MCF 10A (cell line): ENCODE measurements at regions of chr5 and their contacts with region 1.

Region 1: GRCh38 chr5:142024771-142025304 is 12.0 kb upstream of the GNPDA1 start:
- DNase-seq: peak; percentile 91
- H3K4me3 Mint-ChIP-seq: peak overlapping the region; percentile 83
- H3K27ac Mint-ChIP-seq: peak overlapping the region; percentile 96
- H3K4me1 Mint-ChIP-seq: peaks cover 6% of the 10 kb centered on the region
- H3K27me3 Mint-ChIP-seq: no peaks in the 10 kb centered on the region
- CTCF ChIP-seq: no peak

Region 2: DNA sequence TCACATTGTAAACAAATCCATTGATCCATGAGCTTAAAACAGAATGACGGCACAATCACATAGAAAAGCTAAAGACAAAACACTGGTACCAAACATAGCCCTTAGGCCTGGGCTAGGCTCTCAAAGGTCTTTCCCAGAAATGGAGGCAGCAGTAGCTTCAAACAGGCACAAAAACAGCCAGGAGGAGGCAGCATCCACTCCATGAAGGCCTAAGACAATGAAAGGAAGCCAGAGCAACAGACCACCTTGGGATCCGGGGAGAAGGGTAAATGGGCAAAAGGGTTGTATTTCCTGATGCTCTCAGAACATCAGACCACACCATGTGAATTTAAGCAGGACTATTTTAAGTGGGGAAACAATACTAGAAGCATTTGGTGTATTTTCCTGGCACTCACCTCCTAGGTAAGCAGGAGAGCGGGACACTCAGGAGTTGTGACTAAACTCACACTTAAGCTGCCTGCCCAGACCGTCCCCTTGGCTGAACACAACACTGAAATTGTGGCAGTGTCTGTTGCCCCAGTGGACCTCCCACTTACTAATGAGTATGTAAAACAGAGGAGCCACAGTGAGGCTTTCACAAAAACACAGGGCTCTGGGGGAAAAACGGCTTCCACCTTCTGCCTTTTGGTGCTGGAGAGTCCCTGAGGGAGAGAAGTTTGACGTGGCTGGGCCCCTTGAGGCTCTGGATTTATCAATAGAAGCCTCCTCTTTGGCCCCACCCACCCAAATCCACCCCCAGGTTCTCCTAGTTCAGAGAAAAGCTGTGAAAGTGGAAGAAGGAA is 23.9 kb before region 1 on chr5:
- CTCF ChIA-PET with region 1: no interaction called
- POLR2A ChIA-PET with region 1: interaction called, 10 read pairs
- intact Hi-C with region 1: no loop called
- DNase-seq: peak; percentile 43
- H3K4me3 Mint-ChIP-seq: no peak overlapping the region
- H3K27ac Mint-ChIP-seq: no peak overlapping the region
- H3K4me1 Mint-ChIP-seq: peaks cover 9% of the 10 kb centered on the region
- H3K27me3 Mint-ChIP-seq: no peaks in the 10 kb centered on the region
- CTCF ChIP-seq: no peak

Region 3: DNA sequence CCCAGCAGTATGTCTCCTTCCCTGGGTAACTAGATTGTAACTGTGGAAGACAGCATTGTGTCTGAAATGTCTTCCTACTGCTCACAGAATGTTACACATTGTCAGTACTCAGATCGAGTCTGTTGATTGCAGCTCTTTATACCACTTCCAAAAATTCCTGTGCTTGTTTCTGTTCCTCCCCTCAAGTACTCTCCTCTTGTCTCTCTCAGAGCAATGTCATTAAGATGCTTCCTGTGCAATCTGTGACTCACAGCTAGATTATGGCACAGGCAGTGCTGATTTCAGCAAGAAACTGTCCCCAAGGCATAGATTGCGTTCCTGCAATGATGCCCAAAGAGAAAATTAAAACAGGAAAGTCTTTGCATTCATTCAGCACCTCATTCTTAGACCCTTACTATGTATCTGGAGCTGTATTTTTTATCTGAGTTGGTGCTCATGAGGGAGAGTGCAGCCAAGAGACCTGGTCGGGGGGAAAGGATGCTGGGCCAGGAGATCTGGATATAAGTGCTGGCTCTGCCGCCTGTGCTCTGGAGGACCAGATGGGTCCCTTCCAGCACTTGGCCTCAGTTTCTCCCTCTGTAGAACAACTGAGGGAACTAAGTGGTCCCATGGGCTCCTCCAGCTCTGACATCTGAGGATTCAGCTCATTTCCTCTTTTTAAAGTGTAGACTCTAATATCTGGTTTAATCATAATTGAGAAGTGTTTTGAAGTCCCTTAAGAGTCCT is 28.8 kb after region 1 on chr5:
- CTCF ChIA-PET with region 1: interaction called, 4 read pairs
- POLR2A ChIA-PET with region 1: interaction called, 18 read pairs
- intact Hi-C with region 1: no loop called
- DNase-seq: peak; percentile 71
- H3K4me3 Mint-ChIP-seq: no peak overlapping the region
- H3K27ac Mint-ChIP-seq: no peak overlapping the region
- H3K4me1 Mint-ChIP-seq: peaks cover 33% of the 10 kb centered on the region
- H3K27me3 Mint-ChIP-seq: no peaks in the 10 kb centered on the region
- CTCF ChIP-seq: no peak

Region 4: GRCh38 chr5:142059294-142059940 is 34.6 kb after region 1 on chr5:
- CTCF ChIA-PET with region 1: interaction called, 4 read pairs
- POLR2A ChIA-PET with region 1: interaction called, 18 read pairs
- intact Hi-C with region 1: no loop called
- DNase-seq: peak; percentile 53
- H3K4me3 Mint-ChIP-seq: no peak overlapping the region
- H3K27ac Mint-ChIP-seq: no peak overlapping the region
- H3K4me1 Mint-ChIP-seq: peaks cover 24% of the 10 kb centered on the region
- H3K27me3 Mint-ChIP-seq: no peaks in the 10 kb centered on the region
- CTCF ChIP-seq: no peak

Region 5: DNA sequence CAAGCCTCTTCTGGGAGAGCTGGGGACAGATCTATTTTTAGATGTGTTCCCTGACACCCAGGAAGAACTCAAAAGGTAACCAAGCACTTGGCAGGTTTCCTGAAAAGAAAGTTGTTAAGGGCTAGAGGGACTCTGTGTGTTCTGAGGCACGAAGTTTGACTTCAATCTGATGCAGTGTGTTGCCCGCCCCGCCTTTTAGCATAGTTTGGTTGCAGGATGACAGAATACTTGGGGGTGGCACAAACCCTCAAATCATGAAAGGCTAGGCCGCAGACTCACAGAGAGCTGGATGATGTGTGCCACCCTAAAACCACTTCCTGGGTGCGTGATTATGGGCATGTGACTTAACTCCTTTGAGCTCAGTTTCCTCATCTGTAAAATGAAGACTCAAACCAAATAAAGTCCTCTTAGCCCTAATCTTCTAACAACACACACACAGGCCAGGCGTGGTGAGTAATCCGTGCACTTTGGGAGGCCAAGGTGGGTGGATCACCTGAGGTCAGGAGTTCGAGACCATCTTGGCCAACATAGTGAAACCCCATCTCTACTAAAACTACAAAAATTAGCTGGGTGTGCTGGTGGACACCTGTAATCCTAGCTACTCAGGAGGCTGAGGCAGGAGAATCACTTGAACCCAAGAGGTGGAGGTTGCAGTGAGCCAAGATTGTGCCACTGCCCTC is 71.0 kb after region 1 on chr5:
- CTCF ChIA-PET with region 1: no interaction called
- POLR2A ChIA-PET with region 1: interaction called, 4 read pairs
- intact Hi-C with region 1: loop called (anchors 5 kb)
- DNase-seq: no peak
- H3K4me3 Mint-ChIP-seq: no peak overlapping the region
- H3K27ac Mint-ChIP-seq: no peak overlapping the region
- H3K4me1 Mint-ChIP-seq: peaks cover 20% of the 10 kb centered on the region
- H3K27me3 Mint-ChIP-seq: no peaks in the 10 kb centered on the region
- CTCF ChIP-seq: no peak

Region 6: DNA sequence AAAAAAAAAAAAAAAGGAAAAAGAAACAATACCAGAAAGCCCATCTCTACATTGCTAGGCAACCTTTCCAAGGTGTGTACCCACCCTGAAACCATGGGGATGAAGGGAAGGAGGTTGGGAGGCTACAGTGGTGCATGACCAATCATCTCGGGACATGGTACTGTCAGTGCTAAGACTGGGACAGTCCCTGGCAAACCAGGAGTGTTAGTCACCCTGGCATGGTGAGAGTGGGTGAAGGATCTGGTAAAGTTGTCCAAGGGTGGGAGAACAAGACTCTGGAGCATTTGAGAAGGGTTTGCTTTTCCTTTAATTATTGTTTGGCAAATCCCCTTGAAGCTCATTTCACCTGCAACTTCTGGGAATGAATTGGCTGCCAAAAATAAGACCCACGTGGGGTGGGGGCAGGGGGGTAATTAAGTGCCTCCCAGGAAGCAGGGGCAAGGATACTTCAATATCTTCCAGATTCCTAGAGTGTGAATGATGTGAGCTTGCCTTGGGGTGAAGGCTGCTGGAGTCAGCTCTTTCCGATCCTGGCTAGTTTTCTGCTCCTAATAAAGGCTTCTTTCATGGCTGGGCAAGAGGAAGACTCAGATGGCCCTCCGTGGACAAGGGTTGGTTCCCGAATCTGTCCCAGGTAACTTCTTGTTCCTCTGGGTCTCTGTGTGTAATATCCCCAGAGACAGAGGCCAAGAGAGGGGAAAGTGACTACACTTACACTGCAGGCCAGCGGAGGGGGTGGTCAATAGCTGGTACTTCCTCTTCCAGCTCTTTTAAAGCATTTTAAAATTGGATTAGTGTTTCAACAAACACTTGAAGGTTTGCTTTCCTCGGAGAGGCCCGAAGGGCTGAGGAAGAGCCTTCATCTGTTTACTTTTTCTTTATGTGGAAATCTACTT is 361.5 kb after region 1 on chr5:
- CTCF ChIA-PET with region 1: no interaction called
- POLR2A ChIA-PET with region 1: no interaction called
- intact Hi-C with region 1: no loop called
- DNase-seq: peak; percentile 35
- H3K4me3 Mint-ChIP-seq: no peak overlapping the region
- H3K27ac Mint-ChIP-seq: no peak overlapping the region
- H3K4me1 Mint-ChIP-seq: peaks cover 15% of the 10 kb centered on the region
- H3K27me3 Mint-ChIP-seq: no peaks in the 10 kb centered on the region
- CTCF ChIP-seq: no peak